HEK293T (cell line): ENCODE measurements at regions of chr19 and their contacts with region 1.

Region 1: GRCh38 chr19:2475702-2476450 is at the start of gene GADD45B:
- DNase-seq: peak; percentile 99

Region 2: GRCh38 chr19:2371656-2372055 is 104.2 kb before region 1 on chr19:
- CTCF ChIA-PET with region 1: no interaction called
- POLR2A ChIA-PET with region 1: no interaction called
- DNase-seq: no peak

Region 3: GRCh38 chr19:2455851-2456570 is 19.9 kb before region 1 on chr19:
- CTCF ChIA-PET with region 1: no interaction called
- POLR2A ChIA-PET with region 1: interaction called, 27 read pairs
- DNase-seq: peak; percentile 48

Region 4: DNA sequence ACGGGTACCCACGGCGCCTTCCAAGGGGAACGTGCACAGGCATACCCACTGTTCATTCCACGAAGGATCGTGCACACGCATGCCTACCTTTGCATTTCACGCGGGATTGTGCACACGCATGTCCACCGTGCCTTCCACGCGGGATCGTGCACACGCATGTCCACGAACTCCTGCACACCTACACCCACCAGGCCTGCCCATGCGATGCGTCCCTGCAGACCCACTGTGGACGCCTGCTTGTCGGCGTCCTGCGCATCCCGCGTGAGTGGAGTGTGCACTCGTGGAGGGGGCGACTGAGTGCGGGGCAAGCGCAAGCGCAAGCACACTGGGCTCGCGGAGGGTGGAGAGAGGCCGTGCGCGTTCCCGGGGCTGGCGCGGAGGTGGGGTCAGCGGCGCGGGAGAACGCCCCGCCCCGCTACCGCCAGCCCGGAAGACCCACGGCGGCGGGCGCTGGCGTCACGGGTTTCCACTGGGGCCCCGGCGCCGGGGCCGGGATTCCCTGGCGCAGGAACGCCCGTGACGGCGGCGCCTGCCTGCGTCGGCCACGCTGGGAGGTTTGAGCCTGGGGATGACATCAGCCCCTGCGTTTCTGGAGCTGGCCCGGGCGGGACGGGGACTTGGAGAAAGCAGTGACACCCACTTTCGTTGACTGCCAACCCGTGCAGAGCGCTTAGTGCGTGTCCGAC is 18.7 kb after region 1 on chr19:
- CTCF ChIA-PET with region 1: interaction called, 3 read pairs
- POLR2A ChIA-PET with region 1: interaction called, 64 read pairs
- DNase-seq: no peak

Region 5: DNA sequence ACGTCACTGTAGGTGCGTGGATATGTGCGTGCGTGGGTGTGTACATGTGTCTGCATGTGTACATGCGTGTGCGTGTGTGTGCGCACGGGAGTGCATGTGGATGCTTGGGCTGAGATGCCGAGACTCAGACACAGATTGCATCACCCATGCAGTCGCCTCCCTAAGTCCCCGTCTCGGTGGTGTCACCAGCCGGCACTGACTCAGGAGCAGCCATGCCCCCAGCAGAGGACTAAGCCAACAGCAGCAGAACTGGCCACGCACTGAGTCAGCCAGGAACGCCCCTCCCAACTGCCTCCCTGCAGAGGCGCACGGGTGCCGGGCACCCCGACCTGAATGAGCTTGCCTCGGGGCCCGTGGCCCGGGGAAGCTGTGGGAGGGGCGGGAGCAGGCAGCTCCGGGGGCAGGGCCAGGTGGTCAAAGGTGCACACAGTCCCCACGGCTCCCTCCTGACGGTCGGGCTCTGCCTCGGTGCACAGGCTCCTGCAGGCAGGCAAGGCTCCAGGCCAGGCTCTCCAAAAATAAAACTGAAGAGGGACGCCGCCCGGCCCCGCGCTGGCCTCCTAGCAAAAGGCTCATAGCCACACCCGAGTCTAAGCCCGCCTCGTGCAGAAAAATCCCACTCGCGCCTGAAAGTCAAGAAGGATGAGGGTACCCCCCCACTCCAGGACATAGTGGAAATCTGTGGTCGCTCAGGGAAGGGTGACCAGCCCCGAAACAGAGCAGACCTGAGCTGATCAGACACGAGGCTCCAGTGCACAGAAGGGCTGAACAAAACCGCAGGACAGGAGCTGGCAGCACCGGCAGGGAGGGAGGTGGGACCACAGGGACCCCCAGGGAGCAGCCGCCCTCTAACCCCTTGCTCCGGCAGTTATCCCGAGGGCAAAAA is 49.2 kb after region 1 on chr19:
- CTCF ChIA-PET with region 1: no interaction called
- POLR2A ChIA-PET with region 1: interaction called, 95 read pairs
- DNase-seq: no peak

Region 6: DNA sequence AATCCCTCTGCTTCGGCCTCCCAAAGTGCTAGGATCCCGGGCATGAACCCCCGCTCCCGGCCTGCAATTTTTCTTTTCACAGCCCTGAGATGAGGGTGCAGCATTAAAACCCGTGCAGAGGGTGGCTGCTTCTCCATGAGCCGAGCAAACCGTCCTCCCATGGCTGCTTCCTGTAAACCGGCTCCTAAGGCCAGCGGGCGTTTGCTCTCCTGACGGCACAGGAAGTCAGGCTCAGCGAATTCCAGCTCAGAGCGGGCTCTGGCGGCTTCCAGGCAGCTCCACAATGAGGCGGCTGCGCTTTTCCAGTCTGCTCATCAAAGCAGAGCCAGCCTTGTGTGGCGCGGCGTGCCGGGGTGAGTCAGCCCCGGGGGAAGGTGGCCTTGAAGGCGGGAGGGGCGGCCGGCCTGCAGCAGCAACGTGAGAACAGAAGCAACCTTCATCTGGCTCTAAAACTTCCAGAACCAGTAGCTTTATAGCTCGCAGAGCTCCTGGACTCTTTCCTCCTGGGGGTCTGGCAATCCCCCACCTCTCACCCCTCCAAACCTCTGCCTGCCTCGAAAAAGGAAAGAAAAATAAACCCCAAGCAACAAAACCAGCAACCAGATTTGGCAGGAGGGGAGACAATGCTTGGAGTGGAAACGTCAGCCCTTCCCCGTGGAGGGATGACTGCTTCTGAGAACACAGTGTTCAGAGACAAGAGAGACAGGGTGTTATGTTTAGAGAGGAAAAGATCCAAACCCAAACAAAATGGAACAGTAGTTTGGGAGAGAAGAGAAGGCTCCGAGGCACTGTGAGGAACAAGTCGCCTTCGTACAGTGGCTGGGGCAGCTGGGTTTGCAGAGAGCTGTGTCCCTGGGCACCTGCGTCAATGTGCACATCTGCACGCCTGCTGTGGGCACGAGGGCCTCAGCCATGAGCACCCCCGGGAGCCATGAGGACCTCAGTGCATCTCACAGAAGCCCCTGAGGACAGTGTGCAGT is 67.9 kb after region 1 on chr19:
- CTCF ChIA-PET with region 1: no interaction called
- POLR2A ChIA-PET with region 1: interaction called, 122 read pairs
- DNase-seq: peak; percentile 76

Region 7: GRCh38 chr19:2602391-2603181 is 126.7 kb after region 1 on chr19:
- CTCF ChIA-PET with region 1: interaction called, 8 read pairs
- POLR2A ChIA-PET with region 1: interaction called, 81 read pairs
- DNase-seq: no peak

Region 8: DNA sequence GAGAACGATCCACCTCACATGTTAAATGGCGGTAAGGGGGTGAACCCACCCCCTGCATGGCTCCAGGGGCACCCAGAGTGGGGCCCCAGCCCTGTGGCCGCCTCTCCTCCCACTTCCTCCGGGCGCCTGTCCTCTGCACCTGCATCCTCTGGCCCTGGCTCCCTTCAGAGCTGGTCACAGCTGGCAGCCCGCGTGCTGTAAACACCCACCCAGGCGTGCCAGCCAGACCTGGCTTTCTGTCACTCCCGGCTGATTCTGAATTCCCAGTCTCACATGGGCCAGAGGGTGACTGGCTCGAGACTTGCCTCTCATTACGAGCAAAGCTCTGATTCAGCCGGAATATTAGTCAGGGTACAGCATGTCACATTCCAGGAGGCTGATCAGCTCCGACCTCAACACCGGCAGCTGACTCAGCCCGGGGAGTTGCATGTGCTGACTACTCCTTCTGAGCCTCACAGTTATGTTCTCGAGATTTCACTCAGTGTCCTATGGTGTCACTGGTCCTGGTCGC is 151.5 kb after region 1 on chr19:
- CTCF ChIA-PET with region 1: no interaction called
- POLR2A ChIA-PET with region 1: interaction called, 17 read pairs
- DNase-seq: no peak